ENCODE measurements at regions of chr5 and their contacts with region 1.

Region 1: GRCh38 chr5:12794474-12795332 is 890.5 kb upstream of the CTNND2 start:
- DNase-seq: no peak
- H3K4me3 ChIP-seq: no peak overlapping the region
- H3K27ac ChIP-seq: no peak overlapping the region
- H3K4me1 ChIP-seq: no peaks in the 10 kb centered on the region
- CTCF ChIP-seq: no peak

Region 2: GRCh38 chr5:12780536-12780935 is 14.2 kb before region 1 on chr5:
- CTCF ChIA-PET with region 1: no interaction called
- POLR2A ChIA-PET with region 1: interaction called, 3 read pairs
- intact Hi-C with region 1: loop called (anchors 1 kb)
- DNase-seq: no peak
- H3K4me3 ChIP-seq: no peak overlapping the region
- H3K27ac ChIP-seq: no peak overlapping the region
- H3K4me1 ChIP-seq: no peaks in the 10 kb centered on the region
- CTCF ChIP-seq: no peak